Endothelial cell of umbilical vein (primary cell): ENCODE measurements at regions of chr10 and their contacts with region 1.

Region 1: DNA sequence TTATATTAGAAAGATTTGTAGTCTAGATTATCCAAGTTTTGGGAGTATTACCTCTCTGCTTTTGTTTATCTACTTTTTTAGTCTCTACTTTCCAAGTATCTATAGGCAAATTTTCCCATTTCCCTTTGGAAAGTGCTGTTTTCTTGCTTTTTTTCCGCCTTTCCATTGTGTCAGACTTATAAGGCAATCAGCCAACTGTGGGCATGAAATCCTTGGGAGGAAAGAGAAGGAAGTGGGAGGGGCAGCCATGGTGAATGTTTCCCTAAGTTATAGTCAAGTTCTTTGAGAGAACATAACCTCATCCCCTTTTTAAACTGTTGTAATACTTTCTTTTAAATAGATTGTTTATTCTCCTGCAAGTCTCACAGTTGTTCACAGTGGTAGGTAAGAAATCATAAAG is 52.6 kb downstream of the PTEN start:
- DNase-seq: peak; percentile 94
- H3K4me3 ChIP-seq: peak overlapping the region in 1 of 3 experiments; percentile 5
- H3K27ac ChIP-seq: peak overlapping the region; percentile 68
- H3K4me1 ChIP-seq: peaks cover 57% of the 10 kb centered on the region
- H3K27me3 ChIP-seq: no peaks in the 10 kb centered on the region
- CTCF ChIP-seq: no peak
- POLR2A ChIP-seq: no peak

Region 2: DNA sequence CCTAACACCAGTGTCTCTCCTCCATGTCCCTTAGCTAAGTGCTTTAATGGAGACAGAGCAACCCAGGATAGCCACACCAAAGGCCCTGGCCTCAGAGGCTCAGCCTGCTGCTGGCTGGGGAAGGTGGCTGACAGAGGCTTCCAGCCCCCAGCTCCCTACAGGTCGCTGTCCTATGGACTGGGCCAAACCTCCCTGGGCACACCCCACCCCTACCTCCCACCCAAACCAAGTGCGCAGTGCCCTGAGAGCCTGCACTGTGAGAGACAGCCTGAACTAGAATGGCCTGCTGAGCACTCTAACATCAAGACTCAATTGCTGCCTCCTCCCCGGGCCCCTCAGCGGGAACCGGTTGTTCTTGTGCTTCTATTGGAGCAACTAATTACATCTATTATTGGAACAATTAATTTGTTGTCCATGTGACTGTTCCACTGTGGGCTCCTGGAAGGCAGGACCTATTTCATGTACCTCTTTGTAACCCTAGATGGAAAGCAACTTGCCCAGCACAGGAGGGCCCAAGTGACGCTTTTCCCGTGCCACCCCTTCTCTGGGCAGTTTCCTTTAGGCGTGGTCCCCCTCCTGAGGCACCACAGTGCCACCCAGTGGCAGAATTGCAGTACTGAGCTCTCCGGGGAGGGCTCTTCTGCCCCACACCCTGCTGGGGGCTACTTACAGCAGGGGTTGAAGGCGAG is 1330.8 kb before region 1 on chr10:
- CTCF ChIA-PET with region 1: no interaction called
- POLR2A ChIA-PET with region 1: no interaction called
- dilution Hi-C with region 1: no loop called
- intact Hi-C with region 1: no loop called
- DNase-seq: peak; percentile 69
- H3K4me3 ChIP-seq: no peak overlapping the region
- H3K27ac ChIP-seq: no peak overlapping the region
- H3K4me1 ChIP-seq: no peaks in the 10 kb centered on the region
- H3K27me3 ChIP-seq: peaks cover 2 to 3% of the 10 kb centered on the region in 2 experiments
- CTCF ChIP-seq: peak; percentile 88 to 90
- POLR2A ChIP-seq: no peak

Region 3: GRCh38 chr10:87927091-87927490 is 11.1 kb after region 1 on chr10:
- CTCF ChIA-PET with region 1: interaction called, 5 read pairs
- POLR2A ChIA-PET with region 1: no interaction called
- dilution Hi-C with region 1: no loop called
- intact Hi-C with region 1: loop called (anchors 1 kb)
- DNase-seq: peak; percentile 58
- H3K4me3 ChIP-seq: peak overlapping the region in 1 of 3 experiments; percentile 12
- H3K27ac ChIP-seq: peak overlapping the region; percentile 15
- H3K4me1 ChIP-seq: peaks cover 53% of the 10 kb centered on the region
- H3K27me3 ChIP-seq: no peaks in the 10 kb centered on the region
- CTCF ChIP-seq: no peak
- POLR2A ChIP-seq: no peak

Region 4: GRCh38 chr10:87961046-87961713 is 45.2 kb after region 1 on chr10:
- CTCF ChIA-PET with region 1: interaction called, 3 read pairs
- POLR2A ChIA-PET with region 1: no interaction called
- dilution Hi-C with region 1: no loop called
- intact Hi-C with region 1: loop called (anchors 2 kb)
- DNase-seq: peak; percentile 84
- H3K4me3 ChIP-seq: no peak overlapping the region
- H3K27ac ChIP-seq: peak overlapping the region; percentile 58
- H3K4me1 ChIP-seq: peaks cover 26% of the 10 kb centered on the region
- H3K27me3 ChIP-seq: no peaks in the 10 kb centered on the region
- CTCF ChIP-seq: no peak
- POLR2A ChIP-seq: no peak